GM12878 (cell line): ENCODE measurements at regions of chr1 and their contacts with region 1.

Region 1: GRCh38 chr1:203340112-203340804 is 10.7 kb downstream of the FMOD start:
- DNase-seq: no peak
- ATAC-seq: peak; percentile 86
- H3K4me3 ChIP-seq: no peak overlapping the region
- H3K27ac ChIP-seq: no peak overlapping the region
- H3K4me1 ChIP-seq: no peaks in the 10 kb centered on the region
- H3K27me3 ChIP-seq: peaks cover 0 to 6% of the 10 kb centered on the region in 2 experiments; a peak in 1 of 4 replicates
- CTCF ChIP-seq: peak; percentile 84 to 95 (median 92)
- EP300 ChIP-seq: no peak
- POLR2A ChIP-seq: no peak
- RAD21 ChIP-seq: peak; percentile 96

Region 2: DNA sequence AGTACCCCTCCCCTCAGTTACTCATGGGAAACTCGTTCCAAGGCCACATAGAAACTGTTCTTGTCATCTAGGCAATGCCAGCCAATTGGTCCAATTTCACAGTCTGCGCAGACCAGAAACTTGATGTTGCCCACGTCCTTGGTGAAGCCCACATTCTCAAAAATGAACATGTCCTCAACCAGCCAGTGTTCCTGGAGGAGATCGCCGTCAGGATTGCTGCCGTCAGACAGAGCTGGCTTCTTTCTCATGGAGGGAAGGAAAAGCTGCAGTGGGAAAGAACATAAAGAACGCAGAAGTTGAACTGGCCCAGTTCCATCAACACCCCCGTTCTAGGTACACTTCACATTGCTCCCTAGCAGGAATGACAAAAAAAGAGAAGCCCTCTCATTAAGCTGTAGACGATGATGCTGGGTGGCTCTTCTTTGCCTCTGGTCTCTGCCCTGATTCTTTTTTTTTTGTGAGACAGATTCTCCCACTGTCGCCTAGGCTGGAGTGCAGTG is 459.2 kb before region 1 on chr1:
- CTCF ChIA-PET with region 1: no interaction called
- POLR2A ChIA-PET with region 1: no interaction called
- RAD21 ChIA-PET with region 1: no interaction called
- SMC1A ChIA-PET with region 1: no interaction called
- in situ Hi-C with region 1: no loop called
- intact Hi-C with region 1: no loop called
- DNase-seq: no peak
- ATAC-seq: no peak
- H3K4me3 ChIP-seq: no peak overlapping the region
- H3K27ac ChIP-seq: no peak overlapping the region
- H3K4me1 ChIP-seq: no peaks in the 10 kb centered on the region
- H3K27me3 ChIP-seq: no peaks in the 10 kb centered on the region
- CTCF ChIP-seq: no peak
- EP300 ChIP-seq: no peak
- POLR2A ChIP-seq: no peak
- RAD21 ChIP-seq: no peak

Region 3: GRCh38 chr1:203267347-203267846 is 72.9 kb before region 1 on chr1:
- CTCF ChIA-PET with region 1: interaction called, 854 read pairs
- POLR2A ChIA-PET with region 1: interaction called, 39 read pairs
- RAD21 ChIA-PET with region 1: interaction called, 501 read pairs
- SMC1A ChIA-PET with region 1: interaction called, 508 read pairs
- in situ Hi-C with region 1: loop called (anchors 5 kb)
- intact Hi-C with region 1: loop called (anchors 1 kb)
- DNase-seq: no peak
- ATAC-seq: peak; percentile 70
- H3K4me3 ChIP-seq: peak overlapping the region; percentile 61; the same call in 1 of the 2 replicates
- H3K27ac ChIP-seq: peak overlapping the region; percentile 47
- H3K4me1 ChIP-seq: peaks cover 7% of the 10 kb centered on the region
- H3K27me3 ChIP-seq: no peaks in the 10 kb centered on the region; a peak in 1 of 4 replicates
- CTCF ChIP-seq: peak; percentile 89 to 97 (median 91)
- EP300 ChIP-seq: no peak
- POLR2A ChIP-seq: no peak
- RAD21 ChIP-seq: peak; percentile 95

Region 4: GRCh38 chr1:203320591-203321272 is 19.5 kb before region 1 on chr1:
- CTCF ChIA-PET with region 1: interaction called, 71 read pairs
- POLR2A ChIA-PET with region 1: interaction called, 4 read pairs
- RAD21 ChIA-PET with region 1: interaction called, 53 read pairs
- SMC1A ChIA-PET with region 1: interaction called, 96 read pairs
- in situ Hi-C with region 1: no loop called
- intact Hi-C with region 1: no loop called
- DNase-seq: no peak
- ATAC-seq: peak; percentile 68
- H3K4me3 ChIP-seq: no peak overlapping the region; the same call in 1 of the 2 replicates
- H3K27ac ChIP-seq: peak overlapping the region; percentile 70
- H3K4me1 ChIP-seq: peaks cover 56% of the 10 kb centered on the region
- H3K27me3 ChIP-seq: no peaks in the 10 kb centered on the region
- CTCF ChIP-seq: no peak
- EP300 ChIP-seq: peak; percentile 47 to 89; a peak in 2 of 4 replicates
- POLR2A ChIP-seq: no peak; the same call in 1 of the 2 replicates
- RAD21 ChIP-seq: no peak

Region 5: DNA sequence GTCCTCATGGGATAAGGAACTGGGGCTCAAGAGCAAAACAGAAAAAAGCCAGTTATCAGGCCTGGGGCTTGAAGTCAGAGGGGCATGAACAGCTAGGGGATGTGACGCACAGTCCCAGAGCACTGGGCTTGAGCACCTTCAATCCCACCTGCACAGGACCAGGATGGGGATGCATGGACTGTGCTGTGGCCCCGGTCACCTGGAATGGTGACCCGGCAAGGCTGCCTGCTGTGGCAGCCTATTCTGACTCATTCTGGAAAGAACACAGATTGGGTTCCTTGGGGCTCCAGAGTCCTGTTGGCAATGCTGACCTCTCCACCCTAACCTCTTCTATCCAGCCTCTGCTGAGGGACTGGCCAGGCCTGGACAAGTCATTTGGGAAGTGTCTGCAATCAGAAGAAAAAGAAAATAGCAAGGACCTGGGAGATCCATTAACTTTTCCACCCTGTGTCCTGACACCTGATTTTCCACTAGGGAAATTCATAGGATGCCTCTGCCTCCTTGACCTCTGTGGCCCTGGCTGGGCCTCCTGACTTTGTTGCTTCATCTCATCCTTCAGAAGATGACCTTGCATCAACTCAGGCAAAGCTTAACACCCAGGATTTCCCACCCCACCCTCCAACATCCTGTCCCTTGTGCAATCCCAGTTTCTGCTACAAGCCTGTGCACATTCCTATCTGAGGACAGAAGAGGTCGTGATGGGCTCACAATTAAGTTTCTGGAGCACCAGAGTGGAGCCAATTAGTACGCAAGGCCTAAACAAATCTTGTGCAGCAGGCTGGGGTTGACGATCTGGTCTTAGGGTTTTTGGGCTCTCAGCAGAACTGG is 28.6 kb after region 1 on chr1:
- CTCF ChIA-PET with region 1: interaction called, 184 read pairs
- POLR2A ChIA-PET with region 1: no interaction called
- RAD21 ChIA-PET with region 1: interaction called, 4 read pairs
- SMC1A ChIA-PET with region 1: interaction called, 15 read pairs
- in situ Hi-C with region 1: no loop called
- intact Hi-C with region 1: no loop called
- DNase-seq: no peak
- ATAC-seq: no peak
- H3K4me3 ChIP-seq: no peak overlapping the region
- H3K27ac ChIP-seq: no peak overlapping the region
- H3K4me1 ChIP-seq: no peaks in the 10 kb centered on the region
- H3K27me3 ChIP-seq: no peaks in the 10 kb centered on the region; a peak in 1 of 4 replicates
- CTCF ChIP-seq: peak in 2 of 3 experiments; percentile 13 to 25; a peak in 3 of 6 replicates
- EP300 ChIP-seq: no peak
- POLR2A ChIP-seq: no peak
- RAD21 ChIP-seq: peak; percentile 69

Region 6: GRCh38 chr1:203448521-203449061 is 108.3 kb after region 1 on chr1:
- CTCF ChIA-PET with region 1: interaction called, 429 read pairs
- POLR2A ChIA-PET with region 1: interaction called, 3 read pairs
- RAD21 ChIA-PET with region 1: interaction called, 259 read pairs
- SMC1A ChIA-PET with region 1: interaction called, 295 read pairs
- in situ Hi-C with region 1: loop called (anchors 5 kb)
- intact Hi-C with region 1: loop called (anchors 1 kb)
- DNase-seq: no peak
- ATAC-seq: no peak
- H3K4me3 ChIP-seq: no peak overlapping the region
- H3K27ac ChIP-seq: no peak overlapping the region
- H3K4me1 ChIP-seq: peaks cover 2% of the 10 kb centered on the region; the same call in 1 of the 2 replicates
- H3K27me3 ChIP-seq: no peaks in the 10 kb centered on the region
- CTCF ChIP-seq: no peak
- EP300 ChIP-seq: no peak
- POLR2A ChIP-seq: no peak
- RAD21 ChIP-seq: no peak

Region 7: DNA sequence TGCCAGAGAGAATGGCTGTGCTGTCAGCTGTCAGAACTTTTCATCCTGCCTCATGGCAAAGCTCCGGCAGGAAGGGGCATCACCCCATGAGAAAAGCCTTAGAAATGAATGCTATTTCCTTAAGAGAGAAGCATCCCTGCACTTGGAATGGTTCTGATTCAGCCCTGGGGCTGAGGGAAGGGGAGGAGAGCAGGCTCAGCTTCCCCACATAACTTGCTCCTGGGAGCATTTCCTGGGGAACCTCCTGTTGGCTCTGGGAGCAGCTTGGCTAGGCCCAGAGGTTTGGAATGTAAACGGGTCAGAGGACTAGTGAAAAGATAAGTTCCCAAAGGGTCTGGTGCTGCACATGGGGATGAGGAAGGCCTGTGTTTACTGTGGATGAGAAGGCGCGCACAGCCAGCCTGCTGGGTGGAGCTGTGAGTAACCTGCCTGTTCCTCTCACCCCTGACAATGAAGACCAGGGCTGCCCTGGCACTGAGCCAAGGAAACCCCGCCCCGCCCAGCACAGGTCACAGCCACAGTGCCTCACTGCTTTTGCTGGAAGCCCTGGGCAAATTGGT is 140.3 kb after region 1 on chr1:
- CTCF ChIA-PET with region 1: interaction called, 323 read pairs
- POLR2A ChIA-PET with region 1: interaction called, 6 read pairs
- RAD21 ChIA-PET with region 1: interaction called, 141 read pairs
- SMC1A ChIA-PET with region 1: interaction called, 152 read pairs
- in situ Hi-C with region 1: loop called (anchors 5 kb)
- intact Hi-C with region 1: no loop called
- DNase-seq: no peak
- ATAC-seq: peak; percentile 50
- H3K4me3 ChIP-seq: no peak overlapping the region
- H3K27ac ChIP-seq: no peak overlapping the region
- H3K4me1 ChIP-seq: peaks cover 9% of the 10 kb centered on the region; the same call in 1 of the 2 replicates
- H3K27me3 ChIP-seq: peaks cover 0 to 2% of the 10 kb centered on the region in 2 experiments; a peak in 1 of 4 replicates
- CTCF ChIP-seq: 0 out of 6 replicates have a peak, but pooled peaks of 1 of the 3 experiments have one; percentile 0
- EP300 ChIP-seq: no peak
- POLR2A ChIP-seq: no peak
- RAD21 ChIP-seq: no peak

Region 8: GRCh38 chr1:203702130-203702577 is 361.9 kb after region 1 on chr1:
- CTCF ChIA-PET with region 1: interaction called, 47 read pairs
- POLR2A ChIA-PET with region 1: no interaction called
- RAD21 ChIA-PET with region 1: interaction called, 16 read pairs
- SMC1A ChIA-PET with region 1: interaction called, 14 read pairs
- in situ Hi-C with region 1: no loop called
- intact Hi-C with region 1: loop called (anchors 2 kb)
- DNase-seq: peak; percentile 40
- ATAC-seq: peak; percentile 92
- H3K4me3 ChIP-seq: no peak overlapping the region
- H3K27ac ChIP-seq: no peak overlapping the region
- H3K4me1 ChIP-seq: no peaks in the 10 kb centered on the region; the same call in 1 of the 2 replicates
- H3K27me3 ChIP-seq: 0 out of 4 replicates have a peak, but pooled peaks cover 0 to 2% of the 10 kb centered on the region in 2 experiments
- CTCF ChIP-seq: peak; percentile 77 to 89 (median 88)
- EP300 ChIP-seq: no peak
- POLR2A ChIP-seq: no peak
- RAD21 ChIP-seq: peak; percentile 94